AG04449 (cell line): ENCODE measurements at regions of chr9 and their contacts with region 1.

Region 1: GRCh38 chr9:105414947-105415661 is 32.7 kb upstream of the FSD1L start:
- DNase-seq: no peak
- H3K4me3 ChIP-seq: no peak overlapping the region
- CTCF ChIP-seq: peak; percentile 64

Region 2: DNA sequence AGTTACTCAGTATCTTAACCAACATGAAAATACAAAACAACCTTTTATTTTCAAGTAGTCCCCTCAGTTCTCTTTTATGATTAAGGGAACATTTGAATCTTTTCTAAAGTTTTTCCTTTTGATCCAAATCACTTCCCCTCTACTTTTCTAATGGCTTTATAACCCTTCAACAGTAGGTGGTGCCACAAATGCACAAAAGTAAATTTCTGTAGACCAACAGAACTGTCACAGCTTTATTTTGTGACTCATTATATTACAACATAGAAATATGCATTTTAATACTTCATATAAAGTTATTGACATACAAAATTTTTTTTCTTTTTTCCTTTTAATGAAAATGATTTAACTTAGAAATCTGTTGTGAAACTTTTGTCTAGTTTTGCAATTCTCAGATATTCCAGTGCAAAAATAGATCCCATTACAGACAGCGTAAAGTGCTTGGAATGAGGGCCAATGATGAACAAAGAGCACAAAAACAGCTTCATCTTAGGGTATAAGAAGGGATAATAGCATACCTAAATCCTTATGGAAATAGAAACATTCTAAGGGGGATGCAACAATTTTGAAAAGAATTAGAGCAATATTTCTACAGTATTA is 634.2 kb before region 1 on chr9:
- CTCF ChIA-PET with region 1: interaction called, 14 read pairs
- POLR2A ChIA-PET with region 1: no interaction called
- DNase-seq: no peak
- H3K4me3 ChIP-seq: no peak overlapping the region
- CTCF ChIP-seq: peak; percentile 36

Region 3: GRCh38 chr9:104927912-104928740 is 487.0 kb before region 1 on chr9 and contains the start of gene ABCA1:
- CTCF ChIA-PET with region 1: interaction called, 13 read pairs
- POLR2A ChIA-PET with region 1: no interaction called
- DNase-seq: no peak
- H3K4me3 ChIP-seq: peak within 1 kb of the TSS; percentile 73
- CTCF ChIP-seq: no peak

Region 4: DNA sequence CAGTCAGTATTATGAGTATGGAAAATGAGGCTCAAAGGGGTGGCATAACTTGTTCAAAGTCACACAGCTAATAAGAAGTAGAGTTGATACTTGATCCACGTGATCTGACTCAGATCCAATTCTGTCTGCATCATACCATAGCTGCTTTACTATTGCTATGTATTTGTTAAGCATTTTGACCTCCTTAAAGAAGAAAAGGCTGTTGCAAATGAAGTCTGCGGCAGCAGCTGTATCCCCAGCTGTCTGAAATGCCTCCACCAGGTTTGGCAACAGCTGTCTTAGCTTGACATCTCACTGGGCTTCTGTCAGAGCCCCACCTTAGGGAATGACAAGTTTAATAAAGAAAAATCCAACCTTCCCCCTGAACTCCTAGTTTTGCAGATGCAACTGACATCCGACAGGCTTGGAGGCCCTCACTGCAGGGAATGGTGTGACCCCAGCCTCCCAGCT is 246.2 kb before region 1 on chr9:
- CTCF ChIA-PET with region 1: interaction called, 235 read pairs
- POLR2A ChIA-PET with region 1: no interaction called
- DNase-seq: peak; percentile 21
- H3K4me3 ChIP-seq: no peak overlapping the region
- CTCF ChIP-seq: no peak

Region 5: DNA sequence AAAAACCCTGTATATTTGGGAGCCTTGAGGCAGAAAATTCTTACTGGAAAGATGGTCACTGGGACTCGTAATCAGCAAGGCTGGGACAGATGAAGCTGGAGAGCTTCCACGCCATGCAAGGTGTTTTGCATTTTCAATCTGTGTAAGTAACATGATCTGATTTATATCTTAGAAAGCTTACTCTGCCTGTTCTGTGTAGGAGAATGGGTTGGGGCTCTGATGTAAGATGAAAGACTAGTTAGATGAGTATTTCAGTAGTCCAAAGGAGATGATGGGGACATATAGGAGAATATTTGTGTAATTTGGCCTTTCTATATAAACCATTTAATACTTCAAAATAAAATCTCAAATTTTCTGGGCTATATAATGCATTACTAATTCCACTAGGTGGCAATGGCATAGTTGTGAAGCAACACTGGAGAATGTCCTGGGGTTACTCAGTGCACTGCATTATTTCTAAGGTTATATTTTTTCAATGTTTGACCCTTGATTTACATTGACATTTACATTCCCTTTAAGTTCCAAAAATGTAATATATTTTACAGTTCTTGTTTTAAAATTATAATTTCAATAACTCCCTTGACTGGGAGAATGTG is 10.8 kb after region 1 on chr9:
- CTCF ChIA-PET with region 1: interaction called, 21 read pairs
- POLR2A ChIA-PET with region 1: no interaction called
- DNase-seq: no peak
- H3K4me3 ChIP-seq: no peak overlapping the region
- CTCF ChIP-seq: peak; percentile 28